Activated B cell treated with CpG ODN at 0.5 μM for 24 hours (primary cell): ENCODE measurements at regions of chr2 and their contacts with region 1.

Region 1: GRCh38 chr2:196263181-196263747 is 91.9 kb upstream of the STK17B start:
- DNase-seq: no peak
- ATAC-seq: peak; percentile 80
- H3K4me3 Mint-ChIP-seq: peak overlapping the region; percentile 71
- H3K27ac Mint-ChIP-seq: peak overlapping the region; percentile 91
- H3K4me1 Mint-ChIP-seq: peaks cover 69% of the 10 kb centered on the region
- H3K27me3 Mint-ChIP-seq: no peaks in the 10 kb centered on the region
- CTCF ChIP-seq: no peak

Region 2: DNA sequence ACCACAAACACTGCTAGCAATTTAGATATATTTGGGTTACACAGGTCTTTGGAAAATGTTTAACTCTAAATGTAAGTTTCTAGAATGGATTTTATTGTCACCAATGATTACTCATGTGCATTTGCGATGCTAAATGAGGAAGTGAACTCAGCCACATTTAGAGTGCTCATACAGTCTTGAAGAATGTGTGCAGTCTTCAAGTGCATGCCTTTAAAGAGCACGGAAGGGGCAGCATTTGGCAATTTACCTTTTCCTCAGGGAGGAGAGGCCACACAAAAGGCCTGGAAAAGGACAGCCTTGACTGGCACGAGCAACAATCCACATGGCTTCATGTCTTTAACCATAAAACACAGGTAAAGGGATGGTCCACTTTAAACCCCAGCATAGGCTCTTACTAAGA is 13.4 kb before region 1 on chr2:
- CTCF ChIA-PET with region 1: interaction called, 27 read pairs
- POLR2A ChIA-PET with region 1: interaction called, 26 read pairs
- intact Hi-C with region 1: loop called (anchors 1 kb)
- DNase-seq: peak; percentile 29
- ATAC-seq: peak; percentile 90
- H3K4me3 Mint-ChIP-seq: peak overlapping the region; percentile 47
- H3K27ac Mint-ChIP-seq: peak overlapping the region; percentile 91
- H3K4me1 Mint-ChIP-seq: peaks cover 75% of the 10 kb centered on the region
- H3K27me3 Mint-ChIP-seq: no peaks in the 10 kb centered on the region
- CTCF ChIP-seq: no peak

Region 3: GRCh38 chr2:196356332-196356731 is 93.1 kb after region 1 on chr2:
- CTCF ChIA-PET with region 1: no interaction called
- POLR2A ChIA-PET with region 1: no interaction called
- intact Hi-C with region 1: no loop called
- DNase-seq: no peak
- ATAC-seq: no peak
- H3K4me3 Mint-ChIP-seq: no peak overlapping the region
- H3K27ac Mint-ChIP-seq: no peak overlapping the region
- H3K4me1 Mint-ChIP-seq: no peaks in the 10 kb centered on the region
- H3K27me3 Mint-ChIP-seq: peaks cover 16% of the 10 kb centered on the region
- CTCF ChIP-seq: no peak